MCF 10A (cell line): ENCODE measurements at regions of chr5 and their contacts with region 1.

Region 1: GRCh38 chr5:109439590-109439989 is 29.8 kb upstream of the PJA2 start:
- DNase-seq: no peak
- H3K4me3 Mint-ChIP-seq: no peak overlapping the region
- H3K27ac Mint-ChIP-seq: no peak overlapping the region
- H3K4me1 Mint-ChIP-seq: no peaks in the 10 kb centered on the region
- H3K27me3 Mint-ChIP-seq: no peaks in the 10 kb centered on the region
- CTCF ChIP-seq: no peak

Region 2: GRCh38 chr5:108521841-108522506 is 917.6 kb before region 1 on chr5:
- CTCF ChIA-PET with region 1: no interaction called
- POLR2A ChIA-PET with region 1: no interaction called
- intact Hi-C with region 1: loop called (anchors 5 kb)
- DNase-seq: peak; percentile 74
- H3K4me3 Mint-ChIP-seq: no peak overlapping the region
- H3K27ac Mint-ChIP-seq: no peak overlapping the region
- H3K4me1 Mint-ChIP-seq: no peaks in the 10 kb centered on the region
- H3K27me3 Mint-ChIP-seq: peaks cover 34% of the 10 kb centered on the region
- CTCF ChIP-seq: peak; percentile 56

Region 3: GRCh38 chr5:108681079-108681921 is 758.3 kb before region 1 on chr5:
- CTCF ChIA-PET with region 1: no interaction called
- POLR2A ChIA-PET with region 1: no interaction called
- intact Hi-C with region 1: loop called (anchors 2 kb)
- DNase-seq: peak; percentile 73
- H3K4me3 Mint-ChIP-seq: no peak overlapping the region
- H3K27ac Mint-ChIP-seq: no peak overlapping the region
- H3K4me1 Mint-ChIP-seq: no peaks in the 10 kb centered on the region
- H3K27me3 Mint-ChIP-seq: peaks cover 16% of the 10 kb centered on the region
- CTCF ChIP-seq: peak; percentile 69

Region 4: DNA sequence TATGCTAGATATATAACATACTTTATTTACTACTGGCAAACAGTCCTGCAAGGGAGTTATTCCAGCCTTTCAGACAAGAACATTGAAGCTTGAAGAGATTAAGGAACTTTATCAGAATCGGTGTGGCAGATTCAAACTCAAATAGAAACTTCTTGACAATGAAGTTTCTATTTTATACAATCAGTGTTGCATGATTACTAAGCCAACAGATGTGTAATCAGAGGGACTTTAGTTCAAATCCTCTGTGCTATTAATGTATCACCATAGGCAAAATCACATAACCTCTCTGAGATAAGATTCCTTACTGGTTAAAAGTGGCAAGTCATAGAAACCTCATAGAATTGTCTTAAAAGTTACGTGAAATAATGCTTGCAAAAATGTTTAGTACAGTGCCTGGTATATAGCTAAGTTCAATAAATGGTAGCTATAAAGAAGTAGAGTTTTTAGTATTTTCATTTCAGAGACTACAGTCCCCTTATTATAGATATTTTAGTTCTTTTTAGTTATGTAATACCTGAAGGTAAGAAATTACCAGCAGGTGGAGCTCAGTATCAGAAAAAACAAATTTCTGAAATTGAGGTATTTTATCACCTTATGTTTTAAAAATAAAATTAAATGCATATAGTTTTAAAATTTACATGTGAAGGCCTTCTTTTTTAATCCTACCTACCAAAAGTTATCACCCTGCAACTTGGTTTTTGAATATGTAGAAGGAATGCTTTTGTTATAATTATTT is 519.8 kb before region 1 on chr5:
- CTCF ChIA-PET with region 1: no interaction called
- POLR2A ChIA-PET with region 1: no interaction called
- intact Hi-C with region 1: loop called (anchors 5 kb)
- DNase-seq: no peak
- H3K4me3 Mint-ChIP-seq: no peak overlapping the region
- H3K27ac Mint-ChIP-seq: no peak overlapping the region
- H3K4me1 Mint-ChIP-seq: no peaks in the 10 kb centered on the region
- H3K27me3 Mint-ChIP-seq: no peaks in the 10 kb centered on the region
- CTCF ChIP-seq: peak; percentile 32

Region 5: GRCh38 chr5:109191153-109191558 is 248.4 kb before region 1 on chr5:
- CTCF ChIA-PET with region 1: interaction called, 3 read pairs
- POLR2A ChIA-PET with region 1: no interaction called
- intact Hi-C with region 1: loop called (anchors 1 kb)
- DNase-seq: peak; percentile 52
- H3K4me3 Mint-ChIP-seq: no peak overlapping the region
- H3K27ac Mint-ChIP-seq: peak overlapping the region; percentile 63
- H3K4me1 Mint-ChIP-seq: peaks cover 5% of the 10 kb centered on the region
- H3K27me3 Mint-ChIP-seq: no peaks in the 10 kb centered on the region
- CTCF ChIP-seq: no peak

Region 6: DNA sequence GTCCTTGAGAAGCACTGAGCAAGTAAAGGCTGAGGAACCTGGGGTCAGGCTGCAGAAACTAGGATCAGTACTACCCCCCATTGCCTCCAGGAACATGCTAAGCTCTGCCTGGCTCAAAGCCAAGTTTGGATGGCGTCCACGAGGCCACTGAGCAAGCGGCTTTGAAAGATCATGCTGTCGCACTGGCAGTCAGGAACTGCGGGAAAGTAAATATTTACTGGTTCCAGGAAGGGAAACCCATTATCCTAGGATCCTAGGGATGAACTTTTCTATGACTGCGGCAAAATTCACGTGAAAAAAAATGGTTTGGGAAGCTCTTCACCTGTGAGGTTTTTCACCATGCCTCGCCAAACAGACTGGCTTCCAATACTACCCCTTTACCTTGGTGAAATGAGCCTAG is 45.4 kb after region 1 on chr5:
- CTCF ChIA-PET with region 1: no interaction called
- POLR2A ChIA-PET with region 1: no interaction called
- intact Hi-C with region 1: no loop called
- DNase-seq: peak; percentile 46
- H3K4me3 Mint-ChIP-seq: no peak overlapping the region
- H3K27ac Mint-ChIP-seq: no peak overlapping the region
- H3K4me1 Mint-ChIP-seq: no peaks in the 10 kb centered on the region
- H3K27me3 Mint-ChIP-seq: no peaks in the 10 kb centered on the region
- CTCF ChIP-seq: no peak